CD8-positive, alpha-beta T cell (primary cell): ENCODE measurements at regions of chr2 and their contacts with region 1.

Region 1: GRCh38 chr2:96868555-96869280 is 1.2 kb downstream of the SEMA4C start:
- DNase-seq: peak in 8 of 9 experiments; percentile 43 to 80 (median 66)
- ATAC-seq: peak; percentile 39
- H3K4me3 ChIP-seq: peak overlapping the region; percentile 77 to 83
- H3K4me3 Mint-ChIP-seq: peak overlapping the region; percentile 86
- H3K27ac ChIP-seq: peak overlapping the region; percentile 53 to 60
- H3K27ac Mint-ChIP-seq: peak overlapping the region; percentile 84
- H3K4me1 ChIP-seq: peaks cover 38% of the 10 kb centered on the region
- H3K4me1 Mint-ChIP-seq: peaks cover 45% of the 10 kb centered on the region
- H3K27me3 ChIP-seq: no peaks in the 10 kb centered on the region
- H3K27me3 Mint-ChIP-seq: no peaks in the 10 kb centered on the region
- CTCF ChIP-seq: peak; percentile 50

Region 2: GRCh38 chr2:96839293-96839874 is 29.3 kb before region 1 on chr2:
- CTCF ChIA-PET with region 1: interaction called, 3 read pairs
- POLR2A ChIA-PET with region 1: interaction called, 8 read pairs
- intact Hi-C with region 1: loop called in 1 of 2 experiments (anchors 1 kb)
- DNase-seq: peak; percentile 65 to 92 (median 86)
- ATAC-seq: peak; percentile 97
- H3K4me3 ChIP-seq: peak overlapping the region; percentile 35 to 40
- H3K4me3 Mint-ChIP-seq: peak overlapping the region; percentile 70
- H3K27ac ChIP-seq: peak overlapping the region in 1 of 2 experiments; percentile 42
- H3K27ac Mint-ChIP-seq: peak overlapping the region; percentile 62
- H3K4me1 ChIP-seq: peaks cover 26% of the 10 kb centered on the region
- H3K4me1 Mint-ChIP-seq: peaks cover 18% of the 10 kb centered on the region
- H3K27me3 ChIP-seq: no peaks in the 10 kb centered on the region
- H3K27me3 Mint-ChIP-seq: no peaks in the 10 kb centered on the region
- CTCF ChIP-seq: no peak

Region 3: GRCh38 chr2:96913398-96914202 is 44.9 kb after region 1 on chr2:
- CTCF ChIA-PET with region 1: interaction called, 8 read pairs
- POLR2A ChIA-PET with region 1: interaction called, 10 read pairs
- intact Hi-C with region 1: loop called (anchors 2 kb)
- DNase-seq: peak in 8 of 9 experiments; percentile 46 to 81 (median 65)
- ATAC-seq: peak; percentile 78
- H3K4me3 ChIP-seq: peak overlapping the region; percentile 40 to 42
- H3K4me3 Mint-ChIP-seq: peak overlapping the region; percentile 82
- H3K27ac ChIP-seq: peak overlapping the region; percentile 32 to 75
- H3K27ac Mint-ChIP-seq: peak overlapping the region; percentile 94
- H3K4me1 ChIP-seq: peaks cover 53% of the 10 kb centered on the region
- H3K4me1 Mint-ChIP-seq: peaks cover 75% of the 10 kb centered on the region
- H3K27me3 ChIP-seq: no peaks in the 10 kb centered on the region
- H3K27me3 Mint-ChIP-seq: no peaks in the 10 kb centered on the region
- CTCF ChIP-seq: no peak

Region 4: GRCh38 chr2:96927405-96928243 is 58.9 kb after region 1 on chr2:
- CTCF ChIA-PET with region 1: interaction called, 651 read pairs
- POLR2A ChIA-PET with region 1: interaction called, 10 read pairs
- intact Hi-C with region 1: loop called in 1 of 2 experiments (anchors 2 kb)
- DNase-seq: no peak
- ATAC-seq: no peak
- H3K4me3 ChIP-seq: no peak overlapping the region
- H3K4me3 Mint-ChIP-seq: no peak overlapping the region
- H3K27ac ChIP-seq: no peak overlapping the region
- H3K27ac Mint-ChIP-seq: no peak overlapping the region
- H3K4me1 ChIP-seq: peaks cover 23% of the 10 kb centered on the region
- H3K4me1 Mint-ChIP-seq: peaks cover 27% of the 10 kb centered on the region
- H3K27me3 ChIP-seq: no peaks in the 10 kb centered on the region
- H3K27me3 Mint-ChIP-seq: no peaks in the 10 kb centered on the region
- CTCF ChIP-seq: no peak